Activated naive CD4-positive, alpha-beta T cell treated with anti-CD3 and anti-CD28 coated beads for 36 hours (primary cell): ENCODE measurements at regions of chr6 and their contacts with region 1.

Region 1: GRCh38 chr6:112311950-112312547 is 35.1 kb upstream of the RFPL4B start:
- DNase-seq: peak; percentile 17
- H3K4me3 Mint-ChIP-seq: no peak overlapping the region
- H3K27ac Mint-ChIP-seq: no peak overlapping the region
- H3K4me1 Mint-ChIP-seq: no peaks in the 10 kb centered on the region
- H3K27me3 Mint-ChIP-seq: no peaks in the 10 kb centered on the region

Region 2: DNA sequence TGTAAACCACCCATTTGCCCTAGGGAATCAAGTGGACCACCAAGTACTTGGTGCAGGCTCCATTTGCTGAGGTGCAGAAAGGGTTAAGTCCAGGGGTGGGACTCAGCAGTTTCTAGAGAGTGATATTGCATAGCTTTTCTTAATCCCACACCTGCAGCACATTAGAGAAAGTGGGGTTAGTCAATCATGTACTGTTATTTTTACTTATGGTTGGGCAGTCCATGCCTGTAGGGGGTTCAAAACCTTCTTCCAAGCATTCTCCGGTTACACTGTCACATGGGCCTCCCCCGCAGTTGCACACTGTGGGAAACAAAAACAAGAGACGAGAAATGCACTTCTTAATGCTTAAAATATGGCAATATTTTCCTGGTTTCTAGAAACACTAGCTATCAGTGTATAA is 123.1 kb before region 1 on chr6:
- CTCF ChIA-PET with region 1: interaction called, 10 read pairs
- intact Hi-C with region 1: no loop called
- DNase-seq: no peak
- H3K4me3 Mint-ChIP-seq: no peak overlapping the region
- H3K27ac Mint-ChIP-seq: no peak overlapping the region
- H3K4me1 Mint-ChIP-seq: no peaks in the 10 kb centered on the region
- H3K27me3 Mint-ChIP-seq: peaks cover 14% of the 10 kb centered on the region

Region 3: DNA sequence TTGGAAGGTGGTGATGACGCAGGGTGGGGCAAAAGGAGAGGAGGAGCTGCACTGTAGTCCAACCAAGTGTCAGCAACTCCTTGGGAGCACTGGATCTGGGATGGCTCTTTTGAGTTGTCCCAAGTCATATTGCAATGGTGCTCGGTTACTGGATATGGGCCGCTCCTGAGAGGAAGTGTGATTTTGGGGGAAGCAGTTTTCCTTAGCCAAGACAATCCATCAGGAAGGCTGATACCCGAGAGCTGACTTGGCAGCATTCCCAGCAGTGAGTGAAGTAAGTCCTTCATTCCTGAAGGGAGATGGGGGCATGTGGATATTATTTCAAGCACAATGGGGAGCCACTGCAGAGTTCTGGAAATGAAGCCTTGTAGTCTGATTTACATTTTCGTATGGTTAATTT is 389.2 kb after region 1 on chr6:
- CTCF ChIA-PET with region 1: no interaction called
- intact Hi-C with region 1: no loop called
- DNase-seq: no peak
- H3K4me3 Mint-ChIP-seq: no peak overlapping the region
- H3K27ac Mint-ChIP-seq: no peak overlapping the region
- H3K4me1 Mint-ChIP-seq: no peaks in the 10 kb centered on the region
- H3K27me3 Mint-ChIP-seq: no peaks in the 10 kb centered on the region

Region 4: GRCh38 chr6:112886415-112886814 is 574.4 kb after region 1 on chr6:
- CTCF ChIA-PET with region 1: no interaction called
- intact Hi-C with region 1: no loop called
- DNase-seq: no peak
- H3K4me3 Mint-ChIP-seq: no peak overlapping the region
- H3K27ac Mint-ChIP-seq: no peak overlapping the region
- H3K4me1 Mint-ChIP-seq: no peaks in the 10 kb centered on the region
- H3K27me3 Mint-ChIP-seq: no peaks in the 10 kb centered on the region